Body of pancreas (tissue), 4 donors: ENCODE measurements at regions of chr18 and their contacts with region 1.

Region 1: GRCh38 chr18:51197661-51198424 is at the start of gene MEX3C:
- DNase-seq: peak; percentile 99 to 100 (median 99)
- ATAC-seq: peak; percentile 89
- H3K4me3 ChIP-seq: peak within 1 kb of the TSS; percentile 86 to 91
- H3K27ac ChIP-seq: peak within 1 kb of the TSS; percentile 94 to 98 (median 96)
- H3K4me1 ChIP-seq: peaks cover 22% of the 10 kb centered on the region
- H3K27me3 ChIP-seq: no peaks in the 10 kb centered on the region
- CTCF ChIP-seq: peak in 6 of 7 experiments; percentile 11 to 51 (median 34)
- POLR2A ChIP-seq: peak; percentile 44 to 87 (median 81)
- total RNA-seq, gene MEX3C: 16.5 to 16.6 TPM

Region 2: GRCh38 chr18:50866765-50867164 is 331.1 kb before region 1 on chr18:
- intact Hi-C with region 1: no loop called
- DNase-seq: no peak
- ATAC-seq: no peak
- H3K4me3 ChIP-seq: no peak overlapping the region
- H3K27ac ChIP-seq: no peak overlapping the region
- H3K4me1 ChIP-seq: no peaks in the 10 kb centered on the region
- H3K27me3 ChIP-seq: no peaks in the 10 kb centered on the region
- CTCF ChIP-seq: peak in 5 of 7 experiments; percentile 19 to 54 (median 40)
- POLR2A ChIP-seq: no peak

Region 3: DNA sequence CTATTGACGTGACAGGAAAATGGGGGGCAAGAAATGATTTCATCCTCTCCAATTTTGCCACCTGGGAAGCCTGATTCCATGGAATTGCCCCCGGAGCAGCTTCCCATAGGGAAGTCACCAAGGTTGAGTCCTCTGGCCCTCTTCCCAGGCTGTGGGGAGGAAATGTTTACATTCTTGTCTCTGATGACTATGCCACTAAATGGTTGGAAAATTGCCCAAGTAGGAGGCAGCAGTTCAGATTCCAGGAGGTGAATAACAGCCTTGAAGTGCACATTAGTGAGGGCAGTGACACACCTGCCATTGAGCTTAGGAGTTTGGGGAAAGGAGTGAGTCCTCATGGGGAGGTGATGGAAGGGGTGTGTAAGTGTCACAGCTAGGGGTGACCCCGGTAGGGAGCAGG is 692.9 kb after region 1 on chr18:
- intact Hi-C with region 1: loop called (anchors 10 kb)
- DNase-seq: peak; percentile 44 to 81 (median 74)
- ATAC-seq: peak; percentile 74
- H3K4me3 ChIP-seq: no peak overlapping the region
- H3K27ac ChIP-seq: peak overlapping the region in 2 of 4 donors; percentile 37 to 43
- H3K4me1 ChIP-seq: peaks cover 8% of the 10 kb centered on the region
- H3K27me3 ChIP-seq: no peaks in the 10 kb centered on the region
- CTCF ChIP-seq: no peak
- POLR2A ChIP-seq: no peak